GM10248 (cell line): ENCODE measurements at regions of chr2 and their contacts with region 1.

Region 1: DNA sequence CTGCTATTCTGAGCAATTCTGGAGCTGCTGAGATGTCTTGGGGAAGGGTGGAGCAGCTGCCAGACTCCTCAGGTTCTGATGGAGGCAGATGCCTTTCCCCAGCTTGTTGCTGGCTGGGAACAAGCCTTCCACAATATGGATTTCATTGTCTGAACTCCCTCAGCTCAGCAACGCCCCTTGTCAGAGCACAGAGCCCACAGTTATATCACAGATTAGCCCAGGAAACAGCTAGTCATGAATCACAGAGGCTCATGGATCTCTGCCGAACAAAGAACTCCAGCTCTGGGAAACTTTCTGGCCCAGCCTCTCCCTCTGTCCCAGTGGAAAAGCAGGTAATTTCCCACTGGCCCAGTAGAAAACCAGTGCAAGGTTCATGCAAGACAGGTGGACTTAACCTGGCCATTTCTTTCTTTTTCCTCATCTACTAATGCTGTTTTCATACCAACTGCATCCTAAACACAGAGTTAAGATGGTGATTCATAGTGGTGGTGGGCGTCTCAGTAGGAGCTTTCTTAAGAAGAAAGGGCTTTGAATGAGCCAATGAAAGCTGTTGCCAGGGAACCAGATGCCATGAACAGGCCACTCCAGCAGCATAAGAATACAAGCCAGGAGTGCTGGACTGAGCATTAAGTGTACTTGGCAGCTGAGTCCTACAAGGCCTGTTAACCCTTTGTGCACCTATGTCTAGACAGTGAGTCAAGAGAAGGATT is 8.7 kb upstream of the KIAA2012 start:
- DNase-seq: no peak
- CTCF ChIP-seq: no peak

Region 2: DNA sequence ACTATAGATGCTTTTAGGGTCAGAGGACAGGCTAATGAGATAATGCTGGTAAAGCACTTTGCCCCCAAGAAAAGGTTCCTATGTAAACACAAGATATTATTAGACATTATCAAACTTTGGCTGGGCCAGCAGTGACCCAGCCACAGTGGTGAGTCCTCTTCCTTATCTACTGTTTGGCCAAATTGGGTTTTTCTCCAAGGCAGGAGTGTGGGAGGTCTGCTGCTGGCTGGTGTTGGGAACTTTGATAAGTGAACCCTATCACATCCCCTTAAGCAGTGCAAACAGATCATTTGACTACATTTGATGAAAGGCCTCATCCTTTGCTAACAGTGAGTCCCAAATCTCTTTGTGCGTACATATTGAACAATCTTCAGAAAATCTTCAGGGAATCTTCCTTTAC is 14.5 kb before region 1 on chr2:
- CTCF ChIA-PET with region 1: interaction called, 10 read pairs
- POLR2A ChIA-PET with region 1: no interaction called
- DNase-seq: no peak
- CTCF ChIP-seq: no peak